Left cardiac atrium (tissue), 4 donors: ENCODE measurements at regions of chr19 and their contacts with region 1.

Region 1: GRCh38 chr19:45294291-45295029 is 28.2 kb downstream of the CKM start:
- DNase-seq: peak; percentile 63
- ATAC-seq: peak; percentile 83 to 97

Region 2: GRCh38 chr19:45336696-45337251 is 42.3 kb after region 1 on chr19:
- intact Hi-C with region 1: loop called in 1 of 2 experiments (anchors 5 kb)
- DNase-seq: no peak
- ATAC-seq: no peak